ENCODE measurements at regions of chr16 and their contacts with region 1.

Region 1: DNA sequence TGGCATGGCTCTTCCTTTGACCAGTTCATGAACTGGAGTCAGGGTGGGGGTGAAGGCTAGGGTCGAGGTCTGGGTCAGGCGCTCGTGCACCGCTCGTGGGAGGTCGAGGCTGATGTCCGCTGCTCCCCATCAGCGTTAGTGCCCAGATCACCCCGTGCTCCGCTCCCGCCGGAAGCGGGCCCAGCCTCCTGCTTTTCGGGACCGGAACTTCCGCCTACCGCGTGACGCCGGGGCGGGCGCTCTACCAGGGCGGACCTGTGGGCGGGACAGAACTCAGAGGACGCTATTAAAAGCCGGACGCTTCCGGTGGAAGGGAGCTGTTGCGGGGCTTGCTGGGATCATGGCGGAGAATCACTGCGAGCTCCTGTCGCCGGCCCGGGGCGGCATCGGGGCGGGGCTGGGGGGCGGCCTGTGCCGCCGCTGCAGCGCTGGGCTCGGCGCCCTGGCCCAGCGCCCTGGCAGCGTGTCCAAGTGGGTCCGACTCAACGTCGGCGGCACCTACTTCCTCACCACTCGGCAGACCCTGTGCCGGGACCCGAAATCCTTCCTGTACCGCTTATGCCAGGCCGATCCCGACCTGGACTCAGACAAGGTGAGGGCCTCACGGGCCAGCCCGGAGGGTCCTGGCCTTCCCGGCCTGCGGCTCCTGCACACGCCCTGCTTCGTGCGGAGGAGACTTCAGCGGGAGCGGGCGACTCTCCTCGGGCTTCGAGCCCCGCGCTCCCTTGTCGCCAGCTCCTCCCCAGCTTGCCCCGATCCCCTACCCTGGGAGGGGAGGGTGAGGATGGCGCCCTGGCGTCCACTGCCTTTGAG is at the start of gene KCTD5:
- DNase-seq: peak; percentile 94
- H3K4me3 ChIP-seq: peak within 1 kb of the TSS; percentile 76 to 99 (median 96)
- H3K27ac ChIP-seq: peak within 1 kb of the TSS; percentile 72
- H3K4me1 ChIP-seq: no peaks in the 10 kb centered on the region
- H3K27me3 ChIP-seq: no peaks in the 10 kb centered on the region
- CTCF ChIP-seq: no peak
- total RNA-seq, gene KCTD5: 43.7 to 47.8 TPM

Region 2: DNA sequence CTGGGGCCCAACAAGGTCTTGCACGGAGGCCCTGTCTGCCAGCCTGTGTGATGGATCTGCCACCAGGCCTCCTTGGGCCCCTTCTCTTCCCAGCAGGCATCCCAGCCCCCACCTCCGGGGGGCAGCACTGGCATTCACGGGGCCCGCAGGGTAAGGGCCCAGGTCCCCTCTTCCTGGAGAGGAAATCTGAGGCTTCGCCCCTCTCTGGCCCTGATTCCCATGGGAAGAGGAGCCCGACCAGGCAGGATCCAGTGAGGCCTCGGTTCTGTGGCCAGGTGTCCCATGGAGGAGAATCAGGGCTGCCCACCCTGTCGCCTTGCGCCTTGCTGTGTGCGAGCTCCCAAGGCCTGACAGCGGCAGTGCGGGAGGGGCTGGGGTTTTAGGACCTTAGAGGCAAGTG is 96.2 kb before region 1 on chr16:
- CTCF ChIA-PET with region 1: no interaction called
- dilution Hi-C with region 1: no loop called
- in situ Hi-C with region 1: loop called in 1 of 2 experiments (anchors 25 kb)
- intact Hi-C with region 1: no loop called
- DNase-seq: no peak
- H3K4me3 ChIP-seq: no peak overlapping the region
- H3K27ac ChIP-seq: no peak overlapping the region
- H3K4me1 ChIP-seq: no peaks in the 10 kb centered on the region
- H3K27me3 ChIP-seq: no peaks in the 10 kb centered on the region
- CTCF ChIP-seq: no peak

Region 3: DNA sequence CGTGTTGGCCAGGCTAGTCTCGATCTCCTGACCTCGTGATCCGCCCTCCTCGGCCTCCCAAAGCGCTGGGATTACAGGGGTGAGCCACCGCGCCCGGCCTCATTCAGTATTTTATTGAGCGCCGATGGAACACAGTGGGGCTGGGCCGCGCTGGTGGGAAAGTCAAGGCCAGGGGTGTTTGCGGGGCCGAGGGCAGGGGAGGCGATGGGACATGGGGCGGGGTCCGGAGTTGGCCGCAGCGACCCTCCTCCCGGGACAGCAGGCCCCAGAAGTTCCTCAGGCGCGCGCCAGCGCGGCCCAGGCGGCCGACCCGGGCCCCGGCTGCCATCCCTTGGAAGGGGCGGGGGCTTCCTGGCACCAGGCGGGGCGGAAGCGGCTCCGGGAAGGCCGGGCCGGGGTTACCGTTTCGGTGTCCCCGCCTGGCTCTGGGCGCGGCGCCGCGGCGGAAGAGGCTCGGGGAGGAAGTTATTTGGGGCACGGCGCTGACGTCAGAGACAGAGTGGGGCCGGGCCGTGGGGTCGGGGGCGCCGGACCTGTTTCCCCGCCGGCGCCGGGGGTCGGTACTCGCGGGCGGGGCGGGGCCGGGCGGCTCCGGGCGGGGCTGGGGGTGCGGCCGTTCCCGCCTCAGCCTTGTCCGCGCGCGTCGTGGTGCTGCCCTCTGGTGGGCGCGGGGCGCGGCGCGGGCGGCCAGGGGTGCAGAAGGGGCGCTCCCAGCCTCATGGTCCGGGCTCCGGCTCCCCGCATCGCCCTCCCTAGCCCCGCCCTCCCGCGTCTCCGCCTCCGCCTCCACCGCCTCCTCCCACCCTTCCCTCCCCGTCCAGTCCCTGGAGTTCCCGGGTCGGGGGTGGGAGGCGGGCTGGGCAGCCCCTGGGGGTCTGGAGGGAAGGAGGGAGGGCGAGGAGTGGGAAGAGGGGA is 38.6 kb after region 1 on chr16:
- CTCF ChIA-PET with region 1: no interaction called
- dilution Hi-C with region 1: no loop called
- in situ Hi-C with region 1: no loop called
- intact Hi-C with region 1: loop called (anchors 5 kb)
- DNase-seq: peak; percentile 72
- H3K4me3 ChIP-seq: peak overlapping the region; percentile 58 to 67 (median 63)
- H3K27ac ChIP-seq: no peak overlapping the region
- H3K4me1 ChIP-seq: peaks cover 10% of the 10 kb centered on the region
- H3K27me3 ChIP-seq: no peaks in the 10 kb centered on the region
- CTCF ChIP-seq: peak; percentile 30 to 53

Region 4: GRCh38 chr16:2764718-2765117 is 82.3 kb after region 1 on chr16:
- CTCF ChIA-PET with region 1: no interaction called
- dilution Hi-C with region 1: no loop called
- in situ Hi-C with region 1: no loop called
- intact Hi-C with region 1: no loop called
- DNase-seq: no peak
- H3K4me3 ChIP-seq: no peak overlapping the region
- H3K27ac ChIP-seq: no peak overlapping the region
- H3K4me1 ChIP-seq: peaks cover 28% of the 10 kb centered on the region
- H3K27me3 ChIP-seq: no peaks in the 10 kb centered on the region
- CTCF ChIP-seq: peak in 1 of 2 donors; percentile 4

Region 5: GRCh38 chr16:2846511-2847310 is 164.3 kb after region 1 on chr16:
- CTCF ChIA-PET with region 1: no interaction called
- dilution Hi-C with region 1: no loop called
- in situ Hi-C with region 1: no loop called
- intact Hi-C with region 1: no loop called
- DNase-seq: peak; percentile 95
- H3K4me3 ChIP-seq: no peak overlapping the region
- H3K27ac ChIP-seq: peak overlapping the region; percentile 42
- H3K4me1 ChIP-seq: peaks cover 23% of the 10 kb centered on the region
- H3K27me3 ChIP-seq: no peaks in the 10 kb centered on the region
- CTCF ChIP-seq: no peak

Measured in mammary epithelial cell (primary cell).